CD4-positive, alpha-beta memory T cell (primary cell): ENCODE measurements at regions of chr15 and their contacts with region 1.

Region 1: GRCh38 chr15:81480645-81481053 is 106.6 kb upstream of the TMC3 start:
- DNase-seq: peak in 4 of 5 donors; percentile 37 to 47 (median 44)
- H3K4me3 ChIP-seq: no peak overlapping the region
- H3K4me3 Mint-ChIP-seq: peak overlapping the region in 4 of 8 donors; percentile 18 to 61 (median 42)
- H3K27ac ChIP-seq: no peak overlapping the region
- H3K27ac Mint-ChIP-seq: no peak overlapping the region
- H3K4me1 ChIP-seq: no peaks in the 10 kb centered on the region
- H3K4me1 Mint-ChIP-seq: no peaks in the 10 kb centered on the region
- H3K27me3 ChIP-seq: no peaks in the 10 kb centered on the region
- H3K27me3 Mint-ChIP-seq: peaks cover 5% of the 10 kb centered on the region in 2 donors

Region 2: DNA sequence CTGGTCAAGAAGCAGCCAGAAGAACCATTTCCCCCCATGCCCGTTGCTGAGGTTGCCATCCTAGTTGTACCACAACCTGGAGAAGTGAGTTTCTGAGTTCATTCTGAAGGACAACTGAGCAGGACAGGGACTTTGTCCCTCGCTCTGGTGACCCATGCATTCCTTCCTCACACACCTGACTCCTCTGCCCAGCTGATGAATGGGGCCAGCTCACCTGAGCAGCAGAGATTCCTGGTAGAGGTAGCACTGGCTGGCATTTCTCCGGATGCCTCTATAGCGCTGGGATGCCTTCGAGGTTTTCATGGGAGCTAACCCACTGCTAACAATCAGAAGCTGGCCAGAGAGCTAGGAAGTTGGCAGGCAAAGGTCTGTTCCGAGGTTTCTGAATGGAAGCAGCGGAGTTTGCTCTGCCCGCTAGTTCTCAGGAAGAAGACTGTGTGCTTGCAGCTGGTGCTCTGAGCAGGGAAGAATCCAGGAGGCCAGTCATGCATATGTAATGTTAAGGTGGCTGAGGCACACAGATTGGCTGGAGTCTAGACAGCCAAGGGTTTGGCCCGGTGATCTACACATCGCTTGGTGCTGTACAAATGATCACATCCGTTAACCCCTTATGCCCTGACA is 106.8 kb before region 1 on chr15 and contains the start of gene TMC3:
- CTCF ChIA-PET with region 1: no interaction called
- POLR2A ChIA-PET with region 1: no interaction called
- intact Hi-C with region 1: no loop called
- DNase-seq: no peak
- H3K4me3 ChIP-seq: no peak within 1 kb of the TSS
- H3K4me3 Mint-ChIP-seq: no peak within 1 kb of the TSS
- H3K27ac ChIP-seq: no peak within 1 kb of the TSS
- H3K27ac Mint-ChIP-seq: no peak within 1 kb of the TSS
- H3K4me1 ChIP-seq: no peaks in the 10 kb centered on the region
- H3K4me1 Mint-ChIP-seq: no peaks in the 10 kb centered on the region
- H3K27me3 ChIP-seq: no peaks in the 10 kb centered on the region
- H3K27me3 Mint-ChIP-seq: peaks cover 0 to 2% of the 10 kb centered on the region in 2 donors
- total RNA-seq, gene TMC3: not detected

Region 3: GRCh38 chr15:81469154-81469553 is 11.5 kb before region 1 on chr15:
- CTCF ChIA-PET with region 1: interaction called, 22 read pairs
- POLR2A ChIA-PET with region 1: no interaction called
- intact Hi-C with region 1: no loop called
- DNase-seq: no peak
- H3K4me3 ChIP-seq: no peak overlapping the region
- H3K4me3 Mint-ChIP-seq: no peak overlapping the region
- H3K27ac ChIP-seq: no peak overlapping the region
- H3K27ac Mint-ChIP-seq: no peak overlapping the region
- H3K4me1 ChIP-seq: no peaks in the 10 kb centered on the region
- H3K4me1 Mint-ChIP-seq: no peaks in the 10 kb centered on the region
- H3K27me3 ChIP-seq: no peaks in the 10 kb centered on the region
- H3K27me3 Mint-ChIP-seq: peaks cover 19 to 33% of the 10 kb centered on the region in 2 donors

Region 4: DNA sequence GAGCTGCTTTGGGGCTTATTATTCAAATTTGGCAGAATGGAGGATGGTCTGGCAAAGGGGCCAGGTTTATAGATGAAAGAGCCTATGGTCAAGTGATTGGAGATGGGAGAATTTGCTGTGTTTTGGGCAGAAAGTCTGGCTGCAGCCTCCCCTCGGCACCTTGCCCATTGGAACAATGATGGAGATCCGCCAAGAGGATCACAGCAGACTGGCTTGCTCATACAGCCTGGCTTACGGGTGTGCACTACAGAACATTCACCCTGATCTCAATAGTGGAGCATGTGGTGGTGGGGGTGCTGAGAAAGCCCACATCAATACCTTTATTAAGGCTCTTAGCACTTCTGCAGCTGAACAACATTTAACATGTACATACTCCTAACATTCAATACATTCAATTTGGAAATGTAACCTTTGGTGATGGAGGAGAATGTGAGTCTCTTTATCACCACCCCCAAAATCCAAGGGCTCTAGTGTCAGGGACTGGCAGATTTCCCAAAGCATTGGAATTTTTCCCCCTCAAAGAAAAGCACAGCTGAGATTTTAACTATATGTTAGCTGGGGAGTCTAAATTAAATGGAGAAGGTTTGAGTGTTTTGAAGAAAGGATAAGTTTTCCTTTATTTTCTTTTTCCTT is 11.8 kb after region 1 on chr15:
- CTCF ChIA-PET with region 1: interaction called, 15 read pairs
- POLR2A ChIA-PET with region 1: no interaction called
- intact Hi-C with region 1: no loop called
- DNase-seq: no peak
- H3K4me3 ChIP-seq: no peak overlapping the region
- H3K4me3 Mint-ChIP-seq: no peak overlapping the region
- H3K27ac ChIP-seq: no peak overlapping the region
- H3K27ac Mint-ChIP-seq: no peak overlapping the region
- H3K4me1 ChIP-seq: no peaks in the 10 kb centered on the region
- H3K4me1 Mint-ChIP-seq: no peaks in the 10 kb centered on the region
- H3K27me3 ChIP-seq: no peaks in the 10 kb centered on the region
- H3K27me3 Mint-ChIP-seq: peaks cover 16% of the 10 kb centered on the region in 2 donors

Region 5: GRCh38 chr15:81504170-81504905 is 23.7 kb after region 1 on chr15:
- CTCF ChIA-PET with region 1: no interaction called
- POLR2A ChIA-PET with region 1: no interaction called
- intact Hi-C with region 1: no loop called
- DNase-seq: no peak
- H3K4me3 ChIP-seq: no peak overlapping the region
- H3K4me3 Mint-ChIP-seq: no peak overlapping the region
- H3K27ac ChIP-seq: no peak overlapping the region
- H3K27ac Mint-ChIP-seq: no peak overlapping the region
- H3K4me1 ChIP-seq: no peaks in the 10 kb centered on the region
- H3K4me1 Mint-ChIP-seq: no peaks in the 10 kb centered on the region
- H3K27me3 ChIP-seq: no peaks in the 10 kb centered on the region
- H3K27me3 Mint-ChIP-seq: peaks cover 5 to 7% of the 10 kb centered on the region in 2 donors

Region 6: GRCh38 chr15:82046666-82047452 is 566.2 kb after region 1 on chr15:
- CTCF ChIA-PET with region 1: interaction called, 11 read pairs
- POLR2A ChIA-PET with region 1: no interaction called
- intact Hi-C with region 1: no loop called
- DNase-seq: peak; percentile 86 to 91 (median 90)
- H3K4me3 ChIP-seq: peak overlapping the region; percentile 69 to 75
- H3K4me3 Mint-ChIP-seq: peak overlapping the region; percentile 86 to 94 (median 91)
- H3K27ac ChIP-seq: peak overlapping the region; percentile 69
- H3K27ac Mint-ChIP-seq: peak overlapping the region; percentile 17 to 98 (median 88)
- H3K4me1 ChIP-seq: peaks cover 19% of the 10 kb centered on the region
- H3K4me1 Mint-ChIP-seq: peaks cover 4 to 24% (median 14%) of the 10 kb centered on the region in 4 donors
- H3K27me3 ChIP-seq: no peaks in the 10 kb centered on the region
- H3K27me3 Mint-ChIP-seq: peaks cover 4 to 9% of the 10 kb centered on the region in 2 donors

Region 7: GRCh38 chr15:82139823-82140268 is 659.2 kb after region 1 on chr15:
- CTCF ChIA-PET with region 1: interaction called, 4 read pairs
- POLR2A ChIA-PET with region 1: no interaction called
- intact Hi-C with region 1: loop called (anchors 1 kb)
- DNase-seq: peak in 4 of 5 donors; percentile 6 to 29 (median 18)
- H3K4me3 ChIP-seq: no peak overlapping the region
- H3K4me3 Mint-ChIP-seq: no peak overlapping the region
- H3K27ac ChIP-seq: no peak overlapping the region
- H3K27ac Mint-ChIP-seq: peak overlapping the region in 2 of 7 donors; percentile 6 to 27
- H3K4me1 ChIP-seq: no peaks in the 10 kb centered on the region
- H3K4me1 Mint-ChIP-seq: peaks cover 0 to 6% (median 5%) of the 10 kb centered on the region in 4 donors
- H3K27me3 ChIP-seq: no peaks in the 10 kb centered on the region
- H3K27me3 Mint-ChIP-seq: no peaks in the 10 kb centered on the region